HEK293 (cell line): ENCODE measurements at regions of chr4 and their contacts with region 1.

Region 1: GRCh38 chr4:7101692-7102515 is 34.0 kb upstream of the GRPEL1 start:
- H3K4me3 ChIP-seq: no peak overlapping the region
- H3K27ac ChIP-seq: no peak overlapping the region
- H3K4me1 ChIP-seq: no peaks in the 10 kb centered on the region
- CTCF ChIP-seq: peak; percentile 68

Region 2: GRCh38 chr4:6855692-6856297 is 246.1 kb before region 1 on chr4:
- CTCF ChIA-PET with region 1: no interaction called
- POLR2A ChIA-PET with region 1: no interaction called
- H3K4me3 ChIP-seq: no peak overlapping the region
- H3K27ac ChIP-seq: no peak overlapping the region
- H3K4me1 ChIP-seq: no peaks in the 10 kb centered on the region
- CTCF ChIP-seq: no peak

Region 3: DNA sequence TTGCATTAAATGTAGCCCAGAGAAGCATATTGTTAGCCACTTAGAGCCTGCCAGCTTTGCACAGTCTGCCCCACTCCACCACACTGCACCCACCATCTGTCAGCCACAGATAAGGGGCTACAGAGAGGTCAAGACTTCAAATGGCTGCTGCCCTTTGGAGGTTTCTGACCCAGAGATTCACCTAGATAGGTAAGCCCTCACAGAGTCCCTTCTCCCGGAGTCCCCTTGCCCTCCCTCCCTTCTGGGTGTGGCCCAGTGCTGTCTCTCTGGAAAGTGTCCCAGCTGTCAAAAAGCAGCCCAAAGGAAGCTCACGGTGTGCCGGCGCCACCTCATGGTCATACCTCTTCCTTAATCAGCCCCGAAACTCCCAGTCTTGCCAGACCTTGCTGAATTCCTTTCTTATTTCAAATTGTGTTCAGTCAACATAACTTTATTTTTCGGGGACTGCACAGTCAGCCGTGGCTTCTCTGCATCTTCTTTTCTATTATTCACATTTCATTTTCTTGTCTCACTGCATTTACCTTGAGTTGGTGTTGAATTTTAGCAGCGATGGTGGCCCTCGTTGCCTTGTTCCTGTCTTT is 19.9 kb before region 1 on chr4:
- CTCF ChIA-PET with region 1: interaction called, 23 read pairs
- POLR2A ChIA-PET with region 1: no interaction called
- H3K4me3 ChIP-seq: no peak overlapping the region
- H3K27ac ChIP-seq: no peak overlapping the region
- H3K4me1 ChIP-seq: no peaks in the 10 kb centered on the region
- CTCF ChIP-seq: peak; percentile 39

Region 4: GRCh38 chr4:7089213-7089986 is 12.5 kb before region 1 on chr4:
- CTCF ChIA-PET with region 1: interaction called, 23 read pairs
- POLR2A ChIA-PET with region 1: no interaction called
- H3K4me3 ChIP-seq: no peak overlapping the region
- H3K27ac ChIP-seq: no peak overlapping the region
- H3K4me1 ChIP-seq: no peaks in the 10 kb centered on the region
- CTCF ChIP-seq: no peak